Activated T-helper 2 cell treated with anti-CD3 and anti-CD28 coated beads, Interferon-gamma antibody, Interleukin-2, Interleukin-4, amounts not matched to agents 10 μg/mL and 5 μg/mL and 100 μg/mL, durations not matched to agents 14 hours and 24 hours and 36 hours (primary cell): ENCODE measurements at regions of chr12 and their contacts with region 1.

Region 1: DNA sequence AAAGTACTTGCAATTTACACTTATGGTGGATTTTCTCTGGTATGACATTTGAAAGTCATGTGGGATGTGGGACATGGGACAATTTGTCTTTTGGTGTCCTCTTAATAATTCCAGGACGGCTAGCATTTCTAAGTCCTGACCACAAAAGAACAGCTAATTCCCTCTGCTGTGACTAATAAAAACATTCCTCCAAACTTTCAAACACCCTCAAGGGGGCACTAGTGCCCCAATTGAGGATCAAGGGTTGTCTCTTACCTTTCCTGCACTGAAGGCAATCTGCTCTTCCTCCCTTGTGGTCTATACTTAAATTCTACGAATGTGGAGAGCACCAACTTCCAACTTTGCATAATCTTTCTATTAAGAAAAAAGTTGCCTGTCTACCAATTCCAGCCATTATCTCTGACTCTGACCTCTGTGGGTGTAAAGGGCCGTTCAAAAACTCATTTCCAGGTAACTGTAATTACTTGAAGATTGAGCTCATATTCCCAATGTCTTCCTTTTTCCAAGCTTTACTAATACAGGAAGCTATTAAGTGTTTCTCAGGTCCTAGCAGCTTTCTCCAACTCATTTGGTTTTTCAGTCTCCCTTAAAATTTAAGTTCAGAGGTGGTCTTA is 210.2 kb downstream of the PTPRO start:
- DNase-seq: peak; percentile 37
- H3K4me3 Mint-ChIP-seq: no peak overlapping the region
- H3K27ac Mint-ChIP-seq: no peak overlapping the region
- H3K4me1 Mint-ChIP-seq: peaks cover 12% of the 10 kb centered on the region
- H3K27me3 Mint-ChIP-seq: peaks cover 23% of the 10 kb centered on the region

Region 2: DNA sequence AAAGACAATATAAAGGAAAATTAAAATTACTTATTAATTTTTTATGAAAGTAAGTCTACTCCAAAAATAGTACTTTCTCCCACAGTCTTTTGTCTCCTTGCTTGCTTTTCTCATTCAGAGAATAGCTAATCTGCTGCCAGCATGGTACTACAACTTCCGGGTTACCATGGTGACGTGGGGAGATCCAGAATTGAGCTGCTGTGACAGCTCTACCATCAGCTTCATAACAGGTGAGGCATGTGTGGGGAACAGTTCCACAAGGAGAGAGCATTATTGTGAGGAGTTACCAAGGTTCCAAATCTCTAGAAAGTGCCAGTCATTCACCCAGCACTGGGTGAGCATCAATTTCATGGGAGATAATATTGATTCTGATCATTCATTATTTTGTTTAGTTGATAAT is 12.4 kb before region 1 on chr12:
- intact Hi-C with region 1: no loop called
- DNase-seq: no peak
- H3K4me3 Mint-ChIP-seq: no peak overlapping the region
- H3K27ac Mint-ChIP-seq: no peak overlapping the region
- H3K4me1 Mint-ChIP-seq: peaks cover 4% of the 10 kb centered on the region
- H3K27me3 Mint-ChIP-seq: peaks cover 38% of the 10 kb centered on the region

Region 3: GRCh38 chr12:15563663-15564062 is 31.2 kb after region 1 on chr12:
- intact Hi-C with region 1: loop called (anchors 1 kb)
- DNase-seq: no peak
- H3K4me3 Mint-ChIP-seq: peak overlapping the region; percentile 83
- H3K27ac Mint-ChIP-seq: peak overlapping the region; percentile 91
- H3K4me1 Mint-ChIP-seq: peaks cover 65% of the 10 kb centered on the region
- H3K27me3 Mint-ChIP-seq: no peaks in the 10 kb centered on the region

Region 4: DNA sequence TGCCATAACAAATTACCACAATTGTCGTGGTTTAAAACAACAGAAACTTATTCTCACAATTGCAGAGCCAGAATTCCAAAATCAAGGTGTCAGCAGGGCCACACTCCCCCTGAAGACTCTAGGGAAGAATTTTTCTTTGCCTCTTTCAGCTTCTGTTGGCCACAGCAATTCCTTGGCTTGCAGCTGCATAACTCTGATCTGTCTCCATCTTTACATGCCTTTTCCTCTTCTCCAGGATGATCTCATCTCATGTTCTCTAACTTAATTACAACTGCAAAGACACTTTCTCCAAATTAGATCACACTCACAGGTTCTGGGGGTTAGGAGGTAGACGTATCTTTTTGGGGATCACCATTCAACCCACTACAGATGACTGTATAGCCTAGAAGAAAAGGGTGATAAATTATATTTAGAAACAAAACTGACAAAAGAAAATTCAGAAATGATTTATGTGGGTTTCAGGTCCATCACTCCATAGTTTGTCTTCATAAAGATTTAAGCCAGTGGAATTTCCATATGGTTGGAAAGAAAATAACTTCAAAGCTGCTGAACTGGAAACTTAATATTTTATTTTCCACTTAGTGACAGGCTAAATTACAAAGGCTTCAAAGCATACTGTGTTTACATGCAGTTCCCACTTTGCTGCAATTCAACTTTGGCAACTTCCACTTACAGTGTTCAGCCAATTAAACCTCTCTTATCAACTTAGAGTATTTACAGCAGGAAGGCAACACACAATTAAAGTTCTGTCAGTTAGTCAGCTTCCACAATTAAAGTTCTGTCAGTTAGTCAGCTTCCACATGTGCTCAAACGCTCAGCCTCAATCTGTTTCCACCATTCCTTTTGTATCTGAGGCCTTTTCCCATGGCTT is 43.4 kb after region 1 on chr12:
- intact Hi-C with region 1: loop called (anchors 1 kb)
- DNase-seq: no peak
- H3K4me3 Mint-ChIP-seq: no peak overlapping the region
- H3K27ac Mint-ChIP-seq: peak overlapping the region; percentile 46
- H3K4me1 Mint-ChIP-seq: peaks cover 48% of the 10 kb centered on the region
- H3K27me3 Mint-ChIP-seq: no peaks in the 10 kb centered on the region

Region 5: GRCh38 chr12:15584366-15585041 is 52.0 kb after region 1 on chr12:
- intact Hi-C with region 1: loop called (anchors 1 kb)
- DNase-seq: no peak
- H3K4me3 Mint-ChIP-seq: no peak overlapping the region
- H3K27ac Mint-ChIP-seq: no peak overlapping the region
- H3K4me1 Mint-ChIP-seq: peaks cover 18% of the 10 kb centered on the region
- H3K27me3 Mint-ChIP-seq: peaks cover 5% of the 10 kb centered on the region

Region 6: GRCh38 chr12:15856097-15856982 is 323.9 kb after region 1 on chr12:
- intact Hi-C with region 1: loop called (anchors 1 kb)
- DNase-seq: no peak
- H3K4me3 Mint-ChIP-seq: no peak overlapping the region
- H3K27ac Mint-ChIP-seq: no peak overlapping the region
- H3K4me1 Mint-ChIP-seq: no peaks in the 10 kb centered on the region
- H3K27me3 Mint-ChIP-seq: peaks cover 14% of the 10 kb centered on the region